Dendritic cell treated with granulocyte-macrophage colony-stimulating factor and Interleukin-4, amounts not matched to agents 40 ng/mL and 50 ng/mL, for 4 days (primary cell): ENCODE measurements at regions of chr1 and their contacts with region 1.

Region 1: DNA sequence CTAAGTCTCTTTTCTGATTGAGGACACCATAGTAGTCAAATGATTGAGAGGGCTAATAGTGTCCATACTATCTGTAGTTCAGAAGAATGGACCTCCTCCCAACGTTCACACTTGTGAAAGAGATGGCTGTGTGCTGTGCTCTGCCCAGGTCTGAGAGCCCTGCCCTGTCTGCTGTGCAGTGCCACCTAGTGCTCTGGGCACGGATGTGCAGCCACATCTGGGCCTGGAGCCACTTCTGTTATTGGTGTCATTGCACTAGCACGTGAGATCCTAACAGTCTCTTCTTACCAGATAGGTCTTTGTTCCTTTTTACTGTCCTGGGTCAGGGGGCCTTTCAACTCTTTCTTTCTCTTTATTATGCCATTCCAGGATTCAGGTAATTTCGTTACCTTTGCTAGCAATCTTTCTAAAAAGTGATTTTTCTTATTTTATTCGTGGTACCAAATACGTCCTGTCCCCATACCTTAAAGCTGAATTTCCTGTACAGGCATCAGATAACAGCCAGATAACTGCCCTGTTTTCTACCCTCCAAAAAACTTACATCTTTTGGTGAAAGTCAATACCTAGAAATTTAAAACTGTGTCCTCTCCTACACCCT is 21.7 kb downstream of the INTS3 start:
- H3K4me3 Mint-ChIP-seq: no peak overlapping the region
- H3K27ac Mint-ChIP-seq: no peak overlapping the region
- H3K4me1 Mint-ChIP-seq: peaks cover 28% of the 10 kb centered on the region
- H3K27me3 Mint-ChIP-seq: no peaks in the 10 kb centered on the region

Region 2: DNA sequence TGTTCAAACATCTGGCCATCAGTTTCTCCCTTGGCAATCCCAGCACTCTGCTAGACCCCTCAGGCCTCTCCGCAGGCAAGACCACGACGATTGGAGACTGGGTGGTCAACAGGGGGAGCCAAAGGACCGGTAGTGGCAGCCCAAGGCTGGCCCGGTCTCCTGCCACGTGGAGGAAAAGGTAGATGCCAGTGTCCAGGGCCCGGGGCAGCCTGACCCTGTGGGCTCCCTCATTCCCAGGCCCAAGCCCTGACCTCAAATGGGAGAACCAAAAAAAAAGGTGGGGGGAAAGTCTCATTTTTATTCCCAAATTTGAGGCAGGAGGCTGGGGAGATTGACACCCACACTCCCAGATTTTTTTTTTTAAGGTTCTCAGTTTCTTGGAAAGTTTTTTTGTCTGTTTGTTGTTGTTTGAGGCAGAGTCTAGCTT is 238.5 kb before region 1 on chr1:
- intact Hi-C with region 1: loop called (anchors 10 kb)
- H3K4me3 Mint-ChIP-seq: no peak overlapping the region
- H3K27ac Mint-ChIP-seq: no peak overlapping the region
- H3K4me1 Mint-ChIP-seq: peaks cover 42% of the 10 kb centered on the region
- H3K27me3 Mint-ChIP-seq: no peaks in the 10 kb centered on the region

Region 3: DNA sequence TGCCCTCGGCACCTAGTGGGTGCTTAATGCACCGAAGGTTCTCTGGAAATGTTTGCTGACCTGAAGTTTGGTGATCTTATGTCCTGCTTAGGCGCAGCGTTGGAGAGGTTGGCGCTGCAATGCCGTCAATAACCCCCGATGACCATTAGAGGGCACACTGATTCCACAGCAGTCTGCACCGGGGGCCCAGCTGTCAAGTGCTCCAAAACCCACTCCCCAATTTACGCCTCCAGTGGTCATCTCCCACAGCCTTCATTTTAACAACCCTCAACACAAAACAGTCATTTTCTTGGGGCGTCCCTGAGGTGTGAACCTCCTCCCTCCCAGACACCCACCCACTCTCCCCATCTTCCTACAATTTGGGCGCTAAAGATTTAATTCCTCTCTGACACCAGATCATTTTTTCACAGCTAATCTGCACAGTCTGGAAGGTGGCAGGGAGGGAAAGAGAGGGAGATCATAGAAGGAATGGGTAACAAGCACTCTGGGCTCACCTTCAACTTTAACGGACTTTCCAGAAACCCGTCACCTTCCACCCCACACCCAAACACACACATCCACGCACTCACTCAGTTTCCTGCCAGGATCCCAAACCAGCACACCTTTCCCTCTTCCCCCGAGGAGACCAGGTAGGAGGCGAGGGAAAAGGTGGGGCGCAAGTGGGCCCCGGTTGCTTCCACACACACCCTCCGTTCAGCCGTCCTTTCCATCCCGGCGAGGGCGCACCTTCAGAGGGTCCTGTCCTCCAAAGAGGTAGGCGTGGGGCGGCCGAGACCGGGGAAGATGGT is 71.6 kb before region 1 on chr1:
- intact Hi-C with region 1: loop called (anchors 1 kb)
- H3K4me3 Mint-ChIP-seq: peak overlapping the region; percentile 89
- H3K27ac Mint-ChIP-seq: peak overlapping the region; percentile 77
- H3K4me1 Mint-ChIP-seq: peaks cover 32% of the 10 kb centered on the region
- H3K27me3 Mint-ChIP-seq: peaks cover 49% of the 10 kb centered on the region

Region 4: DNA sequence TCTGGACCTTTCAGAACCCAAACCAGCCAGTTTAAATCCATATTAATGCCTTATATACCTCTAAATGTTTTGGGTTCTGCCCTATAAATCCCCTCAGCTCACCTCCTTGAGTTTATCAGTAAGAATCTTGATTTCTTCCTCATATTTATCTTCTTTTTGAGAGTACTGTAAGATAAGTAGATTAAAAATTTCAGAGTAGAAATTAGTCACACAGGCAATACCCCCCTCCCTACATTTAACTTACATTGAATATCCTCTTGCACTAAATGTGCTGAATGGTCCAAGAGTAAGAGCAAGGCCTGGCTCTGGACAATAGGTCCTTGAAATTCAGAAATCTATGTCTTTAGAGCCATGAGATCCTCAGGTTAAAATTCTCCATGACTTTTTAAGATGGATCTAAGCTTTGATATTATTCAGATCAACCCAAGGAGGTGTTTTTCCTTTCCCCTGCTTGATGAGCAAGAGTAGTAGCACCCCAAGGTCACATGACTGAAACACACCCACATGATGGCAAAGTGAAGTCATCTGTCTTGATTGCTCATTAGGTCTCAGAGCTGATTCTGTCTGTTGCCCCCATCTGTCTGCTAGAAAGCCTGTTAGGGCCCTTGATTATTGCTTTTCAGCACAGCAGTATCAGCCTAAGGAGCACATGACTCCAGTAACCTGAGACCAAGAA is 421.2 kb after region 1 on chr1:
- intact Hi-C with region 1: no loop called
- H3K4me3 Mint-ChIP-seq: no peak overlapping the region
- H3K27ac Mint-ChIP-seq: peak overlapping the region; percentile 9
- H3K4me1 Mint-ChIP-seq: peaks cover 60% of the 10 kb centered on the region
- H3K27me3 Mint-ChIP-seq: no peaks in the 10 kb centered on the region